Natural killer cell (primary cell): ENCODE measurements at regions of chr14 and their contacts with region 1.

Region 1: GRCh38 chr14:21917699-21918436 is 244.2 kb upstream of the OR4E1 start:
- DNase-seq: peak in 1 of 2 donors; percentile 86
- ATAC-seq: peak; percentile 59 to 74 (median 72)
- H3K4me3 ChIP-seq: no peak overlapping the region
- H3K4me3 Mint-ChIP-seq: peak overlapping the region; percentile 90
- H3K27ac ChIP-seq: peak overlapping the region; percentile 44
- H3K27ac Mint-ChIP-seq: peak overlapping the region; percentile 75 to 81
- H3K4me1 ChIP-seq: peaks cover 5% of the 10 kb centered on the region
- H3K4me1 Mint-ChIP-seq: peaks cover 50 to 52% of the 10 kb centered on the region in 2 donors
- H3K27me3 ChIP-seq: no peaks in the 10 kb centered on the region
- H3K27me3 Mint-ChIP-seq: no peaks in the 10 kb centered on the region
- CTCF ChIP-seq: peak; percentile 90

Region 2: GRCh38 chr14:21656980-21657379 is 260.9 kb before region 1 on chr14:
- intact Hi-C with region 1: no loop called
- DNase-seq: no peak
- ATAC-seq: no peak
- H3K4me3 ChIP-seq: no peak overlapping the region
- H3K4me3 Mint-ChIP-seq: no peak overlapping the region
- H3K27ac ChIP-seq: no peak overlapping the region
- H3K27ac Mint-ChIP-seq: no peak overlapping the region
- H3K4me1 ChIP-seq: no peaks in the 10 kb centered on the region
- H3K4me1 Mint-ChIP-seq: no peaks in the 10 kb centered on the region
- H3K27me3 ChIP-seq: peaks cover 2% of the 10 kb centered on the region
- H3K27me3 Mint-ChIP-seq: peaks cover 11 to 23% of the 10 kb centered on the region in 2 donors
- CTCF ChIP-seq: no peak

Region 3: GRCh38 chr14:21868442-21869046 is 49.3 kb before region 1 on chr14:
- intact Hi-C with region 1: loop called (anchors 1 kb)
- DNase-seq: peak; percentile 60 to 86
- ATAC-seq: peak; percentile 91 to 100 (median 92)
- H3K4me3 ChIP-seq: no peak overlapping the region
- H3K4me3 Mint-ChIP-seq: no peak overlapping the region
- H3K27ac ChIP-seq: no peak overlapping the region
- H3K27ac Mint-ChIP-seq: peak overlapping the region; percentile 19 to 66
- H3K4me1 ChIP-seq: no peaks in the 10 kb centered on the region
- H3K4me1 Mint-ChIP-seq: peaks cover 30% of the 10 kb centered on the region in 2 donors
- H3K27me3 ChIP-seq: no peaks in the 10 kb centered on the region
- H3K27me3 Mint-ChIP-seq: no peaks in the 10 kb centered on the region
- CTCF ChIP-seq: peak; percentile 97

Region 4: DNA sequence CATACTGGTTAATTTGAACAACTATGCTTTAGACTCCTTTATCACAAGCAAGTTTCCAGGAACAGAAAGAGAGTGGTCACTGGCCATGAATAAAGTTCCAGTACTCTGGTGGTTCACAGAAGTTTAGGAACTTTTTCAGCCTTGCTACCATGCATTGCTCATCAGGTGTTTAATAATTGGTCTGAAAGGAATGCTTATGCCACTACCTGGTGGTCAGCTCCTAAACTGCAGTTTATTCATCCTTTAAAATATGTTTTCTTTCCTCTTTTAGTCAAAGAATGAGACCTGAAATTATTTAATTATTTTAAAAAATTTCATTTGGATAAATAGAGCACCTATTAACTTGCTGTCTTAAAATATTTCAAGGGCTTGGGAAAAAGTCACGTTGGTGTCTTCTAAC is 15.8 kb after region 1 on chr14:
- intact Hi-C with region 1: loop called (anchors 1 kb)
- DNase-seq: peak in 1 of 2 donors; percentile 62
- ATAC-seq: peak; percentile 49 to 83 (median 75)
- H3K4me3 ChIP-seq: no peak overlapping the region
- H3K4me3 Mint-ChIP-seq: no peak overlapping the region
- H3K27ac ChIP-seq: no peak overlapping the region
- H3K27ac Mint-ChIP-seq: no peak overlapping the region
- H3K4me1 ChIP-seq: no peaks in the 10 kb centered on the region
- H3K4me1 Mint-ChIP-seq: peaks cover 10 to 13% of the 10 kb centered on the region in 2 donors
- H3K27me3 ChIP-seq: no peaks in the 10 kb centered on the region
- H3K27me3 Mint-ChIP-seq: peaks cover 0 to 1% of the 10 kb centered on the region in 2 donors
- CTCF ChIP-seq: peak; percentile 84

Region 5: DNA sequence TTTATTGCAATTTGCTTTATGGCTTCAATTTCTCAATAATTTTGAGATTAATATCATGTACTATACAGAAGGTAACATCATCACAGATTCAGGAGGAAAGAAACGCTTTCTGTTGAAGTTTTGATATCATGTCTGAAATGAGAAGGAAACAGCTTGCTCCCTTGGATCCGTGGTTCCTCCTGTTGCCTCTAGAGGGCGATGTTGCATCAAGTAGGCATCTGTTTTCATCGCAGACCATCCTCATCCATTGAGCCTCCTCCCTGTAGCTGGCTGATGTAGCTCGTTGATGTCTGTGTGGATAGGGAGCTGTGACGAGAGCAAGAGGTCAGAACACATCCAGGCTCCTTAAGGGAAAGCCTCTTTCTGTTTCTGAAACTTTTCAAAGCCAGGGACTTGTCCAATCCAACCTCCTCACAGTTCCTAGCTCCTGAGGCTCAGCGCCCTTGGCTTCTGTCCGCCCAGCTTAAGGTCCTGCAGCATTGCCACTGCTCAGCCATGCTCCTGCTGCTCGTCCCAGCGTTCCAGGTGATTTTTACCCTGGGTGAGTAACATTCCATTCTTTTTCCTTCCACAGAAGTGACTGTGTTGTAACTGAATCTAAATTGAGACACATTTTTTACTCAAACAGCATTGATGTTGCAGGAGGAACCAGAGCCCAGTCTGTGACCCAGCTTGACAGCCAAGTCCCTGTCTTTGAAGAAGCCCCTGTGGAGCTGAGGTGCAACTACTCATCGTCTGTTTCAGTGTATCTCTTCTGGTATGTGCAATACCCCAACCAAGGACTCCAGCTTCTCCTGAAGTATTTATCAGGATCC is 60.5 kb after region 1 on chr14:
- intact Hi-C with region 1: loop called (anchors 1 kb)
- DNase-seq: peak; percentile 57 to 83
- ATAC-seq: peak; percentile 65 to 87 (median 81)
- H3K4me3 ChIP-seq: no peak overlapping the region
- H3K4me3 Mint-ChIP-seq: no peak overlapping the region
- H3K27ac ChIP-seq: no peak overlapping the region
- H3K27ac Mint-ChIP-seq: no peak overlapping the region
- H3K4me1 ChIP-seq: no peaks in the 10 kb centered on the region
- H3K4me1 Mint-ChIP-seq: peaks cover 9 to 12% of the 10 kb centered on the region in 2 donors
- H3K27me3 ChIP-seq: peaks cover 4% of the 10 kb centered on the region
- H3K27me3 Mint-ChIP-seq: peaks cover 17 to 19% of the 10 kb centered on the region in 2 donors
- CTCF ChIP-seq: peak; percentile 95